H1 (cell line): ENCODE measurements at regions of chrX and their contacts with region 1.

Region 1: GRCh38 chrX:123779908-123780396 is 47.1 kb upstream of the THOC2 start:
- DNase-seq: no peak
- H3K4me3 ChIP-seq: no peak overlapping the region
- H3K27ac ChIP-seq: no peak overlapping the region
- H3K4me1 ChIP-seq: no peaks in the 10 kb centered on the region
- H3K27me3 ChIP-seq: no peaks in the 10 kb centered on the region
- CTCF ChIP-seq: no peak
- EP300 ChIP-seq: no peak
- POLR2A ChIP-seq: no peak
- RAD21 ChIP-seq: no peak

Region 2: DNA sequence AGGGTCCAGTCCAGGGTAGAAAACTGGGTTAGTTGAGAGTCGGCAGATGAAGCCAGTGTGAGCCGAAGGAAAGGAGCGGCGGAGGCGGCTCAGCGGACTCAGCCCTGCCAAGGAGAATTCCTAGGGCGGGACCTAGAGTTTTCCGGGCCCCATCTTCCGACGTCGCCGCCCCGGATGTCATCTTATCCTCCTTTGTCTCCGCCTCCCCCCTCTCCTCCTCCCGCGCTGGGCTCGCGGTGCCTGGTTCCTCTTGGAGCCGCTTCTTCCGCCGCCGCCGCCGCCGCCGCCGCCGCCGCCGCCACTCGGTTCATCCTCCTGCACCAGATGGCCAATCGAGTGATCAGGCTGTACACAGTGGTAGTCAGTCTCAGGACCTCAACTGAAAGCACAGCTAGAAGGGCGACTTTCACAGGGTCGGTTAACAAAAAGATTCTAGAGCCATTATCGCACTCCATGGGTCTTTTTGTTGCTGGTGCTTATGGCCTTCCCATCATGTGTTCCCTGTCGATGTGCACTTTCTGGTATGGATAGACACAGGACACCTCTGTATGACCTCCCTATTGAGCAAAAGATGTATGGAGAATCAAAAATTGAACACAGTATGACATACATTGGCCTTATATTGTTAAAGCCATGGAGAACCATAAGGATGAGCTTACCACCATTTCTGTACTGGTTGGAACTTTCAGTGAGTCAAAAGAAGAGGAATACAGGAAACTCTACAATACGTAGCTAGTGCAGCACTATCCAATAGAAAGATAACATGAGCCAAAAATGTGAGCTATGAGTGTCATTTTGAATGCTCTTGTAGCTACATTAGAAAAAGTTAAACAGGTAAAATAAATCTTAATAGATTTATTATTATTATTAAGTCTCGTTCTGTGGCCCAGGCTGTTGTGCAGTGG is 14.7 kb before region 1 on chrX:
- CTCF ChIA-PET with region 1: interaction called, 16 read pairs
- POLR2A ChIA-PET with region 1: interaction called, 3 read pairs
- DNase-seq: peak; percentile 39 to 57
- H3K4me3 ChIP-seq: peak overlapping the region in 2 of 4 experiments; percentile 40 to 60; a peak in 3 of 8 replicates
- H3K27ac ChIP-seq: no peak overlapping the region
- H3K4me1 ChIP-seq: no peaks in the 10 kb centered on the region
- H3K27me3 ChIP-seq: no peaks in the 10 kb centered on the region
- CTCF ChIP-seq: no peak
- EP300 ChIP-seq: no peak
- POLR2A ChIP-seq: 0 out of 3 replicates have a peak, but pooled peaks of 1 of the 2 experiments have one; percentile 27
- RAD21 ChIP-seq: no peak

Region 3: GRCh38 chrX:124504111-124504983 is 724.4 kb after region 1 on chrX:
- CTCF ChIA-PET with region 1: no interaction called
- POLR2A ChIA-PET with region 1: no interaction called
- DNase-seq: no peak
- H3K4me3 ChIP-seq: no peak overlapping the region
- H3K27ac ChIP-seq: no peak overlapping the region
- H3K4me1 ChIP-seq: peaks cover 0 to 4% (median 0%) of the 10 kb centered on the region in 4 experiments; a peak in 1 of 7 replicates
- H3K27me3 ChIP-seq: no peaks in the 10 kb centered on the region
- CTCF ChIP-seq: no peak
- EP300 ChIP-seq: no peak
- POLR2A ChIP-seq: no peak
- RAD21 ChIP-seq: no peak